ENCODE measurements at regions of chr9 and their contacts with region 1.

Region 1: DNA sequence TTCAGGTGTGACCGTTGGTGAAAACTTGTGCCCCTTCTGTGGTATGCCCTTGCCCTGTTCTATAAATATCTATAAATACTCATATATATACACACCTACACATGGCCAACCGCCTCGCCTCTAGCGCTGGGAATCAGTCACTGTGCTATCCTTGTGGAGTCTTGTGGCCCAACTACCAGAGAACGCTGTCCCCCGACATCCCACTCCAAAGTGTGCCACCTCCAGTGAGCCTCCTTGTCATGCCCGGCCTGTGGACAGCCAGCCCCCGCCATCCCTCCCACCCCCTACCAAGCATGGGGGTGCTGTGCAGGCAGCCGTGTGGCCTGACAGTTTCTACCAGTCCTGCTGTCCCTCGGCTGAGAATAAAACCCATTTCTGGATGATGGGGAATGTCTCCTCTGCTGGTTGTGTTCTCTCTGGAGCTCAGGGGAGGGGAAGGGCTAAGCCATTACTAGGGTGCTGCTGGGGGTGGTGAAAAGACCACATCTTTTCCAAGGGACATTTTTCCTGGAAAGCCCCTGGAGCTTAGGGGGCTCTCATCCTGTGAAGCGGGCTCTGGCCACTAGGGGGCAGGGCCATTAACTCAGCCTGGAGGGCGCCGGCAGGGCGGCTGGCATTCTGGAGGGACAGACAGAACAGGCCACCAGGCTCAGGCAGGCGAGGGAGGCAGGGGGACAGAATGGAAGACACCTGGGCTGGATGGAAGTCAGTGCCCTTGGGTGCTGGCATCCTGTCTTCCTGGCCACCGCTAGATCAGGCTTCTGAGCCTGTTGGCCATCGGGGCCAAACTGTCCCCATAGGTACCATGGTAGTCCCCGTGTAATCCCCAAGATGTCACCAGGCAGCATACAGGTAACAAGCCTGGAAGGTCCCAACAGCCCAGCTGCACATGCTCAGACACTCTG is 20.7 kb downstream of the GOLGA2 start:
- DNase-seq: peak; percentile 78
- ATAC-seq: no peak
- H3K4me3 Mint-ChIP-seq: no peak overlapping the region
- H3K27ac Mint-ChIP-seq: no peak overlapping the region
- H3K4me1 Mint-ChIP-seq: peaks cover 6% of the 10 kb centered on the region
- H3K27me3 Mint-ChIP-seq: peaks cover 5% of the 10 kb centered on the region
- CTCF ChIP-seq: peak; percentile 94

Region 2: DNA sequence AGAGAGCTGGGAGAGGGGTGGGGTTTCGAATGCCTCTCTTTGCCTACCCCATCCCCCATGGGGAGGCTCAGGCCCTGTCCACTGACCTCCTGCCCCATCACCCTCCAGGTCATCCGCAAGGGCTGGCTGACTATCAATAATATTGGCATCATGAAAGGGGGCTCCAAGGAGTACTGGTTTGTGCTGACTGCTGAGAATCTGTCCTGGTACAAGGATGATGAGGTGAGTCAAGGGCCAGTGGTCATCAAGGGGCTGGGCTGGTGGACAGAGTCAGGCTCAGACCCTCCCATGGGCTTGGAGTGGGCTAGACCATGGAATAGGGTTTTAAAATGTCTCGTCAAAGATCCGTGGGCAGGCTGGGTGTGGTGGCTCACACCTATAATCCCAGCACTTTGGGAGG is 13.0 kb before region 1 on chr9:
- CTCF ChIA-PET with region 1: interaction called, 11 read pairs
- POLR2A ChIA-PET with region 1: no interaction called
- intact Hi-C with region 1: no loop called
- DNase-seq: no peak
- ATAC-seq: no peak
- H3K4me3 Mint-ChIP-seq: no peak overlapping the region
- H3K27ac Mint-ChIP-seq: no peak overlapping the region
- H3K4me1 Mint-ChIP-seq: peaks cover 15% of the 10 kb centered on the region
- H3K27me3 Mint-ChIP-seq: peaks cover 17% of the 10 kb centered on the region
- CTCF ChIP-seq: no peak

Region 3: GRCh38 chr9:128271108-128271507 is 16.0 kb after region 1 on chr9:
- CTCF ChIA-PET with region 1: interaction called, 19 read pairs
- POLR2A ChIA-PET with region 1: no interaction called
- intact Hi-C with region 1: no loop called
- DNase-seq: no peak
- ATAC-seq: no peak
- H3K4me3 Mint-ChIP-seq: no peak overlapping the region
- H3K27ac Mint-ChIP-seq: no peak overlapping the region
- H3K4me1 Mint-ChIP-seq: peaks cover 14% of the 10 kb centered on the region
- H3K27me3 Mint-ChIP-seq: no peaks in the 10 kb centered on the region
- CTCF ChIP-seq: no peak

Region 4: GRCh38 chr9:128406848-128407391 is 151.8 kb after region 1 on chr9:
- CTCF ChIA-PET with region 1: no interaction called
- POLR2A ChIA-PET with region 1: no interaction called
- intact Hi-C with region 1: no loop called
- DNase-seq: no peak
- ATAC-seq: no peak
- H3K4me3 Mint-ChIP-seq: no peak overlapping the region
- H3K27ac Mint-ChIP-seq: no peak overlapping the region
- H3K4me1 Mint-ChIP-seq: no peaks in the 10 kb centered on the region
- H3K27me3 Mint-ChIP-seq: peaks cover 23% of the 10 kb centered on the region
- CTCF ChIP-seq: no peak

Measured in activated CD8-positive, alpha-beta T cell treated with anti-CD3 and anti-CD28 coated beads for 36 hours (primary cell).